K562 (cell line): ENCODE measurements at regions of chr1 and their contacts with region 1.

Region 1: DNA sequence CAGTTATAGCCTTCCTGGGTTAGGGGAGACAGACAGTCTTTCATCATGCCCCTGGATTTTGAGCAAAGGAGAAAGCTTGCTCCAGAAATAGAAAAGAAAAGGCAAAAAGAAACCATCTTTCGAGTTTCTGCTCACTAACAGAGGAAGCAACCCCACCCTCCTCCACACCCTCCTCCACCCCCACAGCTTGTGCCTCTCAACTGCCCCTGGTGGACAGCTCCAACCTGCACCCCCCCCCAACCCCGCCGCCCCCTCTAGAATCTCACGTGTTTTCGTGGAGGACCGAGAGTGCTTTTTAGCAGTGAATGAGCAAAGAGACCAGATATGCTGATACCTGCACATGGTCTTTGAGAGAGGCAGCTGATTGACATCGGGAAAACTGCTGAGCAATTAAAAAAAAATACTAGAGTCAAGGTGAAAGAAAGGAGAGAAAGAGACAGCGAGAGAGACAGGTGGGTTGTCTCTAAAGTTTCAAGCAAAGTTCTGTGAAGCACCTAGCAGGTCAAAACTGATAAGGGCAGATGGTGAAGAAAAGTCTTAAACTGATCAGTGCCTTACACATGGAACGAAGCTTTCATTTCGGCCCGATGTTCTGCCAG is 358.3 kb downstream of the KIF26B start:
- DNase-seq: peak; percentile 54 to 72 (median 56)
- ATAC-seq: peak; percentile 97
- H3K4me3 ChIP-seq: no peak overlapping the region
- H3K27ac ChIP-seq: no peak overlapping the region
- H3K4me1 ChIP-seq: no peaks in the 10 kb centered on the region
- H3K27me3 ChIP-seq: peaks cover 24 to 44% of the 10 kb centered on the region in 2 experiments
- CTCF ChIP-seq: peak in 2 of 3 experiments; percentile 26 to 54; a peak in 3 of 6 replicates
- EP300 ChIP-seq: no peak
- POLR2A ChIP-seq: no peak
- RAD21 ChIP-seq: no peak

Region 2: GRCh38 chr1:245673881-245674414 is 160.9 kb after region 1 on chr1:
- CTCF ChIA-PET with region 1: no interaction called
- POLR2A ChIA-PET with region 1: no interaction called
- in situ Hi-C with region 1: no loop called
- intact Hi-C with region 1: loop called (anchors 10 kb)
- DNase-seq: no peak
- ATAC-seq: no peak
- H3K4me3 ChIP-seq: no peak overlapping the region
- H3K27ac ChIP-seq: no peak overlapping the region
- H3K4me1 ChIP-seq: no peaks in the 10 kb centered on the region; a peak in 2 of 5 replicates
- H3K27me3 ChIP-seq: peaks cover 14 to 36% of the 10 kb centered on the region in 2 experiments; a peak in 4 of 5 replicates
- CTCF ChIP-seq: no peak
- EP300 ChIP-seq: no peak
- POLR2A ChIP-seq: no peak
- RAD21 ChIP-seq: no peak

Region 3: GRCh38 chr1:246280551-246280950 is 767.5 kb after region 1 on chr1:
- CTCF ChIA-PET with region 1: no interaction called
- POLR2A ChIA-PET with region 1: no interaction called
- in situ Hi-C with region 1: no loop called
- intact Hi-C with region 1: loop called (anchors 2 kb)
- DNase-seq: peak in 1 of 4 experiments; percentile 58
- ATAC-seq: peak; percentile 86
- H3K4me3 ChIP-seq: no peak overlapping the region
- H3K27ac ChIP-seq: no peak overlapping the region
- H3K4me1 ChIP-seq: no peaks in the 10 kb centered on the region; a peak in 3 of 5 replicates
- H3K27me3 ChIP-seq: no peaks in the 10 kb centered on the region
- CTCF ChIP-seq: peak; percentile 36 to 75 (median 59); a peak in 5 of 6 replicates
- EP300 ChIP-seq: no peak
- POLR2A ChIP-seq: no peak
- RAD21 ChIP-seq: peak; percentile 93 to 96